ENCODE measurements at regions of chr1 and their contacts with region 1.

Region 1: DNA sequence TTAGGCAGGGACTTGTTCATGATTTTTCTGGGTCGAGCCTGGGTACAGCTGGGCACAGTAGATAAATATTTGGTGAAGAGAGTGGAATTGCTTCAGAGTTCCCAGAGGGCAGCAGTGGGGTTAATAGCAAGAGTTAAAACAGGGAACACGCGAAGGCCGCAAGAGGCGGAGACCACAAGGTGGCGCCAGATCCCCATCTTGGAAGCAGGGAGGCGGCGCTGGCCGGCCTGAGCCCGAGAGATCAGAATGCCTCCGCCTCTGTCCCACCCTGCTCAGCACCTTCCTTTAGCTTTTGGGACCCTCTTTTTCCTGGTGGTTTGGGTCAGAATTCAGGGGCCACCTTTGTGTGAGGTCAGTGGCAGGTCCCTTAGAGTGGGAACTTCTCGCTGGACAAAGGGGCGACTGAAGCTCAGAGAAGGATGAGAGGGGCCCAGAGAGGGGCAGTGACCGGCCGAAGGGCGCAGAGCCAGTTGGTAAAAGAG is 6.5 kb upstream of the PADI2 start:
- DNase-seq: no peak
- ATAC-seq: peak; percentile 90
- H3K4me3 ChIP-seq: no peak overlapping the region
- H3K27ac ChIP-seq: no peak overlapping the region
- H3K4me1 ChIP-seq: no peaks in the 10 kb centered on the region; the same call in 1 of the 2 replicates
- H3K27me3 ChIP-seq: no peaks in the 10 kb centered on the region
- CTCF ChIP-seq: peak; percentile 85 to 96 (median 96)
- EP300 ChIP-seq: no peak
- POLR2A ChIP-seq: no peak
- RAD21 ChIP-seq: peak; percentile 93

Region 2: GRCh38 chr1:17053685-17054410 is 71.9 kb before region 1 on chr1 and contains the start of gene SDHB:
- CTCF ChIA-PET with region 1: interaction called, 171 read pairs
- POLR2A ChIA-PET with region 1: interaction called, 6 read pairs
- RAD21 ChIA-PET with region 1: interaction called, 7 read pairs
- SMC1A ChIA-PET with region 1: interaction called, 5 read pairs
- in situ Hi-C with region 1: no loop called
- intact Hi-C with region 1: loop called (anchors 1 kb)
- DNase-seq: peak; percentile 96
- ATAC-seq: peak; percentile 100
- H3K4me3 ChIP-seq: peak within 1 kb of the TSS; percentile 96
- H3K27ac ChIP-seq: peak within 1 kb of the TSS; percentile 80
- H3K4me1 ChIP-seq: no peaks in the 10 kb centered on the region; the same call in 1 of the 2 replicates
- H3K27me3 ChIP-seq: no peaks in the 10 kb centered on the region
- CTCF ChIP-seq: no peak
- EP300 ChIP-seq: no peak
- POLR2A ChIP-seq: peak; percentile 95
- RAD21 ChIP-seq: no peak
- polyA plus RNA-seq, gene SDHB: 101 to 215 TPM

Region 3: GRCh38 chr1:17109892-17110554 is 15.8 kb before region 1 on chr1:
- CTCF ChIA-PET with region 1: interaction called, 10 read pairs
- POLR2A ChIA-PET with region 1: interaction called, 3 read pairs
- RAD21 ChIA-PET with region 1: interaction called, 5 read pairs
- SMC1A ChIA-PET with region 1: interaction called, 12 read pairs
- in situ Hi-C with region 1: no loop called
- intact Hi-C with region 1: no loop called
- DNase-seq: no peak
- ATAC-seq: no peak
- H3K4me3 ChIP-seq: no peak overlapping the region
- H3K27ac ChIP-seq: no peak overlapping the region
- H3K4me1 ChIP-seq: no peaks in the 10 kb centered on the region
- H3K27me3 ChIP-seq: no peaks in the 10 kb centered on the region; a peak in 1 of 4 replicates
- CTCF ChIP-seq: no peak
- EP300 ChIP-seq: no peak
- POLR2A ChIP-seq: no peak
- RAD21 ChIP-seq: no peak

Region 4: DNA sequence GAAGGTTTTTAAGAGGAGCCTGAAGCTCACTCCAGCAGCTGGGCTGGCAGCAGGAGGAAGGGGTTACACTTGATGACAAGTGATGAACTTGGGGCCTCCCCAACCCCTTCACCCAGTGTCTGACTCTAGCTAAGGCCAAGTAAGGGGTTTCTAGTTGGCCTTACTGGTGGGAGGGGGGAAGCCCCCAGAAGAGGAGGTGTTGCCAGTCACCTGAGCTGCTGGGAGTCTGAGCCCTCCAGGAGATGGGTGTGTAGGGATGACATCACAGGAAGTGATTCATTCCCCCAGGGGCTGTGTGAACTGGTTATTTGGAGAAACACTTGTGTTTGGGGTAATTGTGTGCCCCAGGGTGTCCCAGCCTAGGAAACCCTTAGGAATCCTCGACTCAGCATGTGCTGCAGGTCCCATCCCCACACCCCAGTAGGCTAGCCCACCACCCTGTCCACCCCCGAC is 82.2 kb after region 1 on chr1:
- CTCF ChIA-PET with region 1: interaction called, 18 read pairs
- POLR2A ChIA-PET with region 1: interaction called, 8 read pairs
- RAD21 ChIA-PET with region 1: interaction called, 37 read pairs
- SMC1A ChIA-PET with region 1: interaction called, 16 read pairs
- in situ Hi-C with region 1: no loop called
- intact Hi-C with region 1: no loop called
- DNase-seq: peak; percentile 72
- ATAC-seq: peak; percentile 87
- H3K4me3 ChIP-seq: no peak overlapping the region
- H3K27ac ChIP-seq: no peak overlapping the region
- H3K4me1 ChIP-seq: peaks cover 14% of the 10 kb centered on the region
- H3K27me3 ChIP-seq: peaks cover 0 to 2% of the 10 kb centered on the region in 2 experiments; a peak in 2 of 4 replicates
- CTCF ChIP-seq: no peak
- EP300 ChIP-seq: peak in 1 of 2 experiments; percentile 61; a peak in 1 of 4 replicates
- POLR2A ChIP-seq: no peak
- RAD21 ChIP-seq: no peak

Region 5: DNA sequence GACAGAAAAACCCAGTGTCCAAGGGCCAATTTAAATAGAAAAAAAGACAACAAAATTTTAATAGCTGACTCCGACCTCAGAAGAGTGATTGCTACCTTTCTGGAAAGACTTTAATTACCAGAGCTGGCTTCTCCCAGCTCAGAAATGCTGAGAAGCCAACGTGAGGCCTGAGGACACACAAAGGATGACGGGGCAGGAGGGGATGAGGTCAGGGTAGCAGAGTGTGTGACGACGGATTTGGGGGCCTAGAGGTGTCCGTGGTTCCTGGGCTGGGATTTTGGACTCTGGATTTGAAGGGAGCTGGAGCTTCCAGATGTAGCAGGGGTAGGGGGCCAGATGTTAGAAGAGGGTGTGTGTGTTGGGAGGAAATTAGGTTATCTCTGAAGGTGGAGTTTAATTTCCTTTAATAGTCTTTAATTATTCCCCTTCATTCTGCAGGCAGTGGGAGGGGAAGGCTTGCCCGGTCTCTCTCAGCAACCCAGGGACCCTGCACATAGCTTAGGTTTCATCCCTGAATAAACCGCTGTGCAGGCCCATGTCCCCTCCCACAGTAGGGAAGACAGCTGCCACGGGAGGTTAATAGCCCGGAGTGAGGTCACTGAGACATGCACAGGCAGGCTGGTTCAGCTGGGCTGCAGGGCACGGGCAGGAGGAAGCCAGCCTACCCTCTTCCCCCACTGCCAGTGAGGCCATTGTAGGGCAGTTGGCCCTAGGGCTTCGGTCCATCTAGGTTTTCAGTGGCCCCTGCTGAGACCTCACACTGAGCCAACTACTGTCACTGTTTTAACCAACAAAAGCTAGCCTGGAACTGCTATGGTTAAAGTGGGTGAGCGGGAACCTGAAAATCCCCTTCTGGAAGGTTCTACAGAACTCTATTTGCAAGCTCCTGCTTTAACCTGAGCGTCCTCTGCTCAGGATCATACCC is 119.3 kb after region 1 on chr1:
- CTCF ChIA-PET with region 1: interaction called, 315 read pairs
- POLR2A ChIA-PET with region 1: interaction called, 3 read pairs
- RAD21 ChIA-PET with region 1: interaction called, 186 read pairs
- SMC1A ChIA-PET with region 1: interaction called, 236 read pairs
- in situ Hi-C with region 1: no loop called
- intact Hi-C with region 1: no loop called
- DNase-seq: no peak
- ATAC-seq: peak; percentile 19; the same call in 2 of the 3 replicates
- H3K4me3 ChIP-seq: no peak overlapping the region
- H3K27ac ChIP-seq: no peak overlapping the region
- H3K4me1 ChIP-seq: 0 out of 2 replicates have a peak, but pooled peaks cover 3% of the 10 kb centered on the region
- H3K27me3 ChIP-seq: peaks cover 0 to 2% of the 10 kb centered on the region in 2 experiments; a peak in 1 of 4 replicates
- CTCF ChIP-seq: no peak
- EP300 ChIP-seq: no peak
- POLR2A ChIP-seq: no peak
- RAD21 ChIP-seq: no peak

Region 6: GRCh38 chr1:17335821-17336710 is 210.3 kb after region 1 on chr1:
- CTCF ChIA-PET with region 1: interaction called, 27 read pairs
- POLR2A ChIA-PET with region 1: no interaction called
- RAD21 ChIA-PET with region 1: interaction called, 3 read pairs
- SMC1A ChIA-PET with region 1: interaction called, 8 read pairs
- in situ Hi-C with region 1: no loop called
- intact Hi-C with region 1: loop called (anchors 2 kb)
- DNase-seq: no peak
- ATAC-seq: peak; percentile 85
- H3K4me3 ChIP-seq: no peak overlapping the region
- H3K27ac ChIP-seq: no peak overlapping the region
- H3K4me1 ChIP-seq: no peaks in the 10 kb centered on the region
- H3K27me3 ChIP-seq: no peaks in the 10 kb centered on the region; a peak in 1 of 4 replicates
- CTCF ChIP-seq: peak; percentile 66 to 96 (median 88)
- EP300 ChIP-seq: no peak
- POLR2A ChIP-seq: no peak
- RAD21 ChIP-seq: peak; percentile 58

Region 7: DNA sequence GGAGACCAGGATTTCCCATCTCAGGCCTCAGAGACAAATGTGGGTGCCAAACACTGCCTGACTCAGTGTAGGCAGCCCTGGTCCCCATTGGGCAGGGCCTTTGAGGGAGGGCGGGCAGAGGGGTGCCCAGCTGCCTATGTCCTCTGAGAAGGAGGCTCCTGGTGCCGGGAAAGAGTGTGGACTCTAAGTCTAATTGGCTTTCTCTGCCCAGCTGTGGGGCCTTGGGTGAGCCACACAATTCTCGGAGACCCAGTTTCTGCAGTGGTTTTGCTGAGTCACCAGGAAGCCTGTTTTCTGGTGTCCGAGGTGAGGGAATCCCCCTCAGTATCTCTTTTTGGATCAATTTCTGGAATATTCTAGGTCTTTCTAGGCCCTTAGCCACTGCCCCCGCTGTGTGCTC is 594.1 kb after region 1 on chr1:
- CTCF ChIA-PET with region 1: no interaction called
- POLR2A ChIA-PET with region 1: no interaction called
- RAD21 ChIA-PET with region 1: no interaction called
- SMC1A ChIA-PET with region 1: no interaction called
- in situ Hi-C with region 1: no loop called
- intact Hi-C with region 1: no loop called
- DNase-seq: no peak
- ATAC-seq: no peak
- H3K4me3 ChIP-seq: no peak overlapping the region
- H3K27ac ChIP-seq: no peak overlapping the region
- H3K4me1 ChIP-seq: no peaks in the 10 kb centered on the region
- H3K27me3 ChIP-seq: no peaks in the 10 kb centered on the region
- CTCF ChIP-seq: no peak
- EP300 ChIP-seq: no peak
- POLR2A ChIP-seq: no peak
- RAD21 ChIP-seq: no peak